ENCODE measurements at regions of chr10 and their contacts with region 1.

Region 1: DNA sequence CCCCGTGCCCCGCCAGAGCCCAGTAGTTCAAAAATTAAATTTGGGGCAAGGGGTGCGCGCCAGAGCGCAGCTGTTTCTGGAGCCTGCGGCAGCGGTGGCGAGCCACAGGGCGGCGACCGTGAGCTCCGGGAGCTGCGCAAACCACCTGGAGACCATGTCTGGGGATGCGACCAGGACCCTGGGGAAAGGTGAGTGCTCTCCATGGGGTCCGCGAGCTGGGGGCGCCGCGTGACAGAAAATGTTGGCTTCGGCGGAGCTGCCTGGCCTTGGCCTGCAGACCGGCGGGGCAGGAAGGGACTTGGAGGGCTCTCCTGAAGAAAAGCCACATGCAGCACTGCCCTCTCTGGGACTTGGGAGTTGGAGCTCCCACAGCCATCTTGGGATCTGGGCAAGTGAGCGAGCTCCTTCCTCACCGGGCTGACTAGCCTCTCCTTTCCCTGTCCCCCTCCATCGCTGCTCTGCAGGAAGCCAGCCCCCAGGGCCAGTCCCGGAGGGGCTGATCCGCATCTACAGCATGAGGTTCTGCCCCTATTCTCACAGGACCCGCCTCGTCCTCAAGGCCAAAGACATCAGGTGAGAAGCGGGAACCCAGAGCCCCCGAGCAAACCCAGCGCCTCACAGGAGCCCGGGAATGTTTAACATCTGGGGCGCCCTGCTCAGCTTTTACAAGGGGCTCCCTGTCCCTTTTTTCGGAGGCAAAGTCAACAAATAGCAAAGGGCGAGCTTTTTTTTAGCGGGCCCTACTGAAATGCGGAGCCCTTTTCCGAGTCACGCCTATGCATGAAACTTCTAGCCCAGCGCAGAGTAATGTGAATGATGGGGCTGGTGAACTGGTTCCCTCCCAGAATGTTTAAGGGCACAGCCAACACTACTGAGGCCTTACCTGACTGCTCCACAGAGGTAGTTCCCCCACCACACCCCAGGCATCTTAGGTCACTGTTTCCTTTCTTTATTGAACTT is 6.1 kb downstream of the GSTO2 start:
- DNase-seq: peak; percentile 63
- H3K4me3 Mint-ChIP-seq: peak overlapping the region; percentile 65
- H3K27ac Mint-ChIP-seq: no peak overlapping the region
- H3K4me1 Mint-ChIP-seq: peaks cover 6% of the 10 kb centered on the region
- H3K27me3 Mint-ChIP-seq: peaks cover 9% of the 10 kb centered on the region

Region 2: DNA sequence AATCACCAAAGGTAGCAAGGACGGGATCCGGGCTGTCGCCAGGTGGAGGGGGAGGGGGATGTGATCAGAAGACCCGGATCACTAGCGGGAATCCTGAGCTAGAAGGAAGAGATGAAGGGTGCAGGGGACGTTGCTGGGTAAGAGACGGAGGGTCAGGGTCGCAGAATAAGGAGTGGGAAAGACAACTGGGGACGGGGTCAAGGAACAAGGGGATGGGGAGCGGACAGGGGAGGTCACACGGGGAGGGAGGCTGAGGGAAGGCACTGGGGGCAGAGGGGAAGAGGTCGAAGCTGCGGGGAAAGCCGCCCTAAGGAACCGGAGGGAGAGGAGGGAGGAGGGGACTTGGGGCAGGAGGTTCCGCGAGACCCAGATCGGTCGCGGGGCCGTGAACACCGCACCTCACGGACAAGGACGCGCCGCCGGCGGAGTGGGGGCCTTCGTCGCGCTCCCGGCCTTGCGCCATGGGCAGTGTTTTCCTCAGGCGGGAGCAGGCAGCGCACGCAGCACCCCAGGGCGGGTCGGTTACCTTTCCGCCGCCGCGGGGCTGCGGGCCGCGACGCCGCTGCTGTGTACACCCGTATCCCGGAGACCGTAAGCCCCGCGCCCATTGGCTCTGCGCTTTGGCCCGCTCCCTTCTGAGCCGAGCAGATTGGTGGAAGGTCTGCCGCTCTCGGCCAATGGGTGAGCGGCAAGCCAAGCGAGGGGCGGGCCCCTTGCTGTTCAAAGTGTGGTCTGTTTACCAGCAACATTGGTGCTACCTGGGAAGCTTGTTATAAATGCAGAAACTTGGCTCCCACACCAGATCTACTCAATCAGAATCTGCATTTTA is 43.0 kb before region 1 on chr10 and contains the start of gene CFAP43:
- CTCF ChIA-PET with region 1: interaction called, 12 read pairs
- intact Hi-C with region 1: no loop called
- DNase-seq: peak; percentile 99
- H3K4me3 Mint-ChIP-seq: peak within 1 kb of the TSS; percentile 87
- H3K27ac Mint-ChIP-seq: peak within 1 kb of the TSS; percentile 50
- H3K4me1 Mint-ChIP-seq: peaks cover 6% of the 10 kb centered on the region
- H3K27me3 Mint-ChIP-seq: peaks cover 8% of the 10 kb centered on the region
- total RNA-seq, gene CFAP43: not detected

Region 3: DNA sequence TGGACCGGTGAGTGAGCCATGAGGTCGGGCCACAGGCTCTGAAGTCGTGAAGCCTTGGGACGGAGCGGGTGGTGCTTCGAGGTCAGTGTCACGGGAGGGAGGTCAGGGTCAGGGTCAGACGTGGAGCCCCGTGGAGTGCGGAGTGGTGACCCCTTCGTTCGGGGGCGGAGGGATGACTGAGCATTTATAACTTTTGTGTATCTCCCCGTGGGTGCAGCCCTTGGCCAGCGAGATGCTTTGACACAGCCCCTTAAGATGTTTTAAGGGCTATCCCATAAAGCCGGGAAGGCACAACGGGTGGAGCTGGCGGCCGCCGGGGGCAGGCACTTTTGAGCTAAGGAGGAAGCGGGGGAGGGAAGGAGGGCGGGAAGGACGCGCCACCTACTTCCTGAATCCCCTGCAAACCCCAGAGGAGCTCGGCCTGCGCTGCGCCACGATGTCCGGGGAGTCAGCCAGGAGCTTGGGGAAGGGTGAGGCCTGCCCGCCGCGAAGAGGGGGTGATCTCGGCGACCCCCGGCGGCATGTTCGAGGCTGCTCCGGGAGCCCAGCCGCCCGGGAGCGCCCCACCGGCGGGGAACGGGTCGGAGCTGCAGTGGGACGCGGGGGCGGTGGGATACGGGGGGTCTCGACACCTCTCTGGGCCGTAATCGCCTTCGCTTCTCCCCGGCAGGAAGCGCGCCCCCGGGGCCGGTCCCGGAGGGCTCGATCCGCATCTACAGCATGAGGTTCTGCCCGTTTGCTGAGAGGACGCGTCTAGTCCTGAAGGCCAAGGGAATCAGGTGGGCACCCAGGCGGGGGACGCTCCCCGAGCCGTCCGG is 20.3 kb before region 1 on chr10 and contains the start of gene GSTO1:
- CTCF ChIA-PET with region 1: interaction called, 39 read pairs
- intact Hi-C with region 1: no loop called
- DNase-seq: peak; percentile 72
- H3K4me3 Mint-ChIP-seq: peak within 1 kb of the TSS; percentile 99
- H3K27ac Mint-ChIP-seq: peak within 1 kb of the TSS; percentile 99
- H3K4me1 Mint-ChIP-seq: peaks cover 52% of the 10 kb centered on the region
- H3K27me3 Mint-ChIP-seq: peaks cover 4% of the 10 kb centered on the region
- total RNA-seq, gene GSTO1: 197 to 201 TPM

Region 4: DNA sequence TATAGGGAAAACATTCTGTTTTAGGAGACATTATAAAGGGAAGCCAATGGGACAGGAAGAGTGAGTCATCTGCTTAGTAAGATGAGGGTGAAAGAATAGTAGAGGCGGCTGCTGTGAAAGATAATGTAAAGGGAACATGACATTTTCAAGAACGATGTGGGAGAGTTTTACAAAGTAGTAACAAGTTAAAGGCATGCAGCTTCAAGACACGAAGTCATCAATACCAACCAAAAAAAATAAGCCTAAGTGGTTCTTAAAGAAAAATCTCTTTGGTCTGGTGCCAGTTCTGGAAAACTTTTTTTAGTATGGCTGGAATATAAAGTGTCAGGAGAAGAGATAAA is 14.3 kb before region 1 on chr10:
- CTCF ChIA-PET with region 1: interaction called, 39 read pairs
- intact Hi-C with region 1: no loop called
- DNase-seq: no peak
- H3K4me3 Mint-ChIP-seq: peak overlapping the region; percentile 55
- H3K27ac Mint-ChIP-seq: peak overlapping the region; percentile 96
- H3K4me1 Mint-ChIP-seq: peaks cover 85% of the 10 kb centered on the region
- H3K27me3 Mint-ChIP-seq: no peaks in the 10 kb centered on the region

Region 5: GRCh38 chr10:104291439-104291951 is 16.5 kb after region 1 on chr10:
- CTCF ChIA-PET with region 1: interaction called, 195 read pairs
- intact Hi-C with region 1: no loop called
- DNase-seq: peak; percentile 93
- H3K4me3 Mint-ChIP-seq: peak overlapping the region; percentile 10
- H3K27ac Mint-ChIP-seq: no peak overlapping the region
- H3K4me1 Mint-ChIP-seq: peaks cover 19% of the 10 kb centered on the region
- H3K27me3 Mint-ChIP-seq: peaks cover 3% of the 10 kb centered on the region

Region 6: DNA sequence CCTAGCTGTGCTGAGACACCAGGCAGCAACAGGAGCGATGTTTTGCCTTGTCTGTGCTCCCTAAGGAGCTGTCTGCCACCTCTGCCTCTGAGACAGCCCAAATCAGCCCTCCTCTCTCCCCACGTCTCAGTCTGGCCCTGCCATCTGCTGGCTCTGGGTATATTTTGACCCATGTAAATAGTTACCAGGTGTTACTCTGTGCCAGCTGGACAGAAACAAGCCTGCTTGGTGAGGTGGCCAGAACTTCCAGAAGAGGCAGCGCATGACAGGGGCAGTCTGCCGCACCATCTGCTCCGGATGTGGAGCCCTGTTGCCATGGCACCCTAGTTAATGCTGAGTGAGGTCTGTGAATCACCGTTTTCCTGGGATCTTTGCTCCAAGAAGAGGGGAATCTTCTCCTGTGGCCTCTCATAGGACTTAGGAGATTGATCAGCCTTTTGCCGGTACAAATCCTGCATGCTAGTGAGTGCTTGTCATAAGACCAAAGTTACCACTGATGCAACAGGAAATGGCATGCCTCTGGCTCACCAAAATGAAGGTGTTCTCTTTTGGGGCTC is 25.8 kb after region 1 on chr10:
- CTCF ChIA-PET with region 1: interaction called, 195 read pairs
- intact Hi-C with region 1: no loop called
- DNase-seq: peak; percentile 67
- H3K4me3 Mint-ChIP-seq: peak overlapping the region; percentile 64
- H3K27ac Mint-ChIP-seq: peak overlapping the region; percentile 78
- H3K4me1 Mint-ChIP-seq: peaks cover 36% of the 10 kb centered on the region
- H3K27me3 Mint-ChIP-seq: peaks cover under 1% of the 10 kb centered on the region

Region 7: DNA sequence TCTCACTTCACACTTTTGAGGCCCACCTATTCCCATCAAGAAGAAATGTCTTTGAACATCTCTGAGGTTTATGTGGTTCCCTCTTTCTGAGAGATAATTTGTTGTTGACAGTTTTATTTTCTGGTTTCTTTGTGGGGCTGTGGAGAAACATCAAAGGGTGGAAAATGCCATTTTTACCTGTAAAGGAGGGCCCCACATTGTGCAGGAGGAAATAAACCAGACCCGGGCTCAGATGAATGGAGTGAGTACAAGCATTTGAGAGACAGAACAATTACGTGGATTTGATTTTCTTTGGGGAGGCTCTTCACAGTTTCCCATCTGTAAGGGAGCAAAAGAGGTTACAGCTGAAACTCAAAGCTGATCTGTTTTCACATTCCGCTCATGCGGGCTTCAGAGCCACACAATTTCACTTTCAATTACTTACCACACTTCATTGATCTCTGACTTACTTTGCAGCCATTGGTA is 33.4 kb after region 1 on chr10:
- CTCF ChIA-PET with region 1: interaction called, 30 read pairs
- intact Hi-C with region 1: no loop called
- DNase-seq: peak; percentile 58
- H3K4me3 Mint-ChIP-seq: peak overlapping the region; percentile 17
- H3K27ac Mint-ChIP-seq: peak overlapping the region; percentile 89
- H3K4me1 Mint-ChIP-seq: peaks cover 60% of the 10 kb centered on the region
- H3K27me3 Mint-ChIP-seq: peaks cover 3% of the 10 kb centered on the region